CD8-positive, alpha-beta T cell (primary cell): ENCODE measurements at regions of chr19 and their contacts with region 1.

Region 1: DNA sequence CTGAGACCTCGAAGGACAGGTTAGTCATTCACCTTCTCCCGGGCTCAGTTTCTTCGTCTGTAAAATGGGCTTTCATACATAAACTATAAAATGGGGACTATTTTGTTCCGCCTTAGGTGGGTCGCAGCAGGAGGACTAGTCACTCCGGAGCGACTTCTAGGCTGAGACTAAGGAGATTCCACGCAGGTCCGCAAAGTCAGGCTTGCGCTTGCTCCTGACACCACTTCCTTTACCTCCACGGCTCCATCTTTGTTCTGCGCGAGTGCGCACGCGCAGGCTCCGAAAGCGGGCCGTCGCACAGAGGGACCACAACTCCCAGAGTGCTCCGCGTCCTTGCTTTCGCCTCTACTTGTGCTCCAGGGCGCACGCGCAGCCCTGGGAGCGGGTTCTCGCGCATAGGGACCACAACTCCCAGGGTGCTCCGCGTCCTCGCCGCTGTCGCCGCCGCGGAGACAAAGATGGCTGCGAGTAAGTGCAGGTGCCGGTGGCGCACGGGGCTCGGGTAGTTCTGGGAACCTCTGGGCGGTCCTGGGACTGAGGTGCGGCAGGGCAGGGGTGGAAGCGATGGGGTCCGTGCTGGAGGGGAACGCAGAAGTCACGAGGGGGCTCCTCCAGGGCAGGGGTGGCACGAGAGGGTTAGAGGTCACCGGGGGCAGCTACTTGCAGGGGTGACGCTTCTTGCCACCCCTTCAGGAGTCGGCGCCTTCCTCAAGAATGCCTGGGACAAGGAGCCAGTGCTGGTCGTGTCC is at the start of gene NDUFA3:
- DNase-seq: peak; percentile 94 to 100 (median 98)
- ATAC-seq: peak; percentile 99
- H3K4me3 ChIP-seq: peak within 1 kb of the TSS; percentile 66 to 81
- H3K4me3 Mint-ChIP-seq: peak within 1 kb of the TSS; percentile 99
- H3K27ac ChIP-seq: peak within 1 kb of the TSS; percentile 58 to 84
- H3K27ac Mint-ChIP-seq: peak within 1 kb of the TSS; percentile 96
- H3K4me1 ChIP-seq: peaks cover 10% of the 10 kb centered on the region
- H3K4me1 Mint-ChIP-seq: peaks cover 35% of the 10 kb centered on the region
- H3K27me3 ChIP-seq: no peaks in the 10 kb centered on the region
- H3K27me3 Mint-ChIP-seq: no peaks in the 10 kb centered on the region
- CTCF ChIP-seq: no peak
- total RNA-seq, gene NDUFA3: 51.8 to 66.8 TPM

Region 2: DNA sequence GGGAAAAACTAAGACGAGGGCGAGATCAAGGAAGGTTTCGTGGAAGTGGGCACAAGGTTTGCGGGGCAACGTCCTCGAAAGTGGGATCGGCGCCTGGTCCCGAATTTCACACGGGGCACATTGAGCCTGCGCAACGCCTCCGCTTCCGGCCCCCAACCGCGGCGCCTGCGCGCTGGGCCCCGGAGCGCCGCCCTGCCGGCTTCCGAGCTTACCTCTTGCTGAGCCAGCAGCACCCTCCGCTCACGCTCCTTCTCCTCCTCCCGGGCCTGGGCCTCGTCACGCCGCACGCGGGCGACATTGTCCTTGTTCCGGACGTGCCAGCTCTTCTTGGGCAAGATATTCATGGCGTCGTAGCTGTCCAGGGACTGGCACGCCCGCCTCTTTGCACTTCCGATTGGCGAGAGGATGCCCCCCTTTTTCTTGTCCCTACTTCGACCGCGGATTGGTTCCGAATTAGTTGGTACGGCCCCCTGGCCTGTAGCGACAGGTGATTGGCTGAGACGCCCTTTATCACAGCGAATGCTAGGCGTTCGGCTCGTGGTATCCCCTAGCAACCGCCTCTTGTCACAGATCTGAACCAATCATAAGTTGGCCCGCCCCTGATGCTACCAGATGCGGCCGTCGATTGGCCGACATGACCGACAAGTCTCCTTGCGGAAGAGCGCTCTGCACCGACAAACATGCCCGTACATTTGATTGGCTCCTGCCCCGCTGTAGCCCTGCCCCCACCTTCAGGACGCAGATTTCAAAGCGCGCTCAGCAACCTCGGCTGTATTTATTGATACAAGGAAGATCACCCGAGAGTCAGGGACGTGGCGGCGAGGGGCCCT is 57.0 kb after region 1 on chr19 and contains the start of gene LENG1:
- CTCF ChIA-PET with region 1: no interaction called
- POLR2A ChIA-PET with region 1: no interaction called
- intact Hi-C with region 1: loop called (anchors 1 to 2 kb)
- DNase-seq: peak; percentile 96 to 100 (median 98)
- ATAC-seq: peak; percentile 84
- H3K4me3 ChIP-seq: peak within 1 kb of the TSS; percentile 71 to 75
- H3K4me3 Mint-ChIP-seq: peak within 1 kb of the TSS; percentile 99
- H3K27ac ChIP-seq: peak within 1 kb of the TSS; percentile 79 to 87
- H3K27ac Mint-ChIP-seq: peak within 1 kb of the TSS; percentile 99
- H3K4me1 ChIP-seq: peaks cover 67% of the 10 kb centered on the region
- H3K4me1 Mint-ChIP-seq: peaks cover 59% of the 10 kb centered on the region
- H3K27me3 ChIP-seq: peaks cover 0 to 2% of the 10 kb centered on the region in 2 experiments
- H3K27me3 Mint-ChIP-seq: peaks cover 2% of the 10 kb centered on the region
- CTCF ChIP-seq: no peak
- total RNA-seq, gene LENG1: 15.5 to 15.8 TPM

Region 3: GRCh38 chr19:54390942-54391577 is 288.5 kb after region 1 on chr19:
- CTCF ChIA-PET with region 1: no interaction called
- POLR2A ChIA-PET with region 1: no interaction called
- intact Hi-C with region 1: no loop called
- DNase-seq: peak; percentile 38 to 88 (median 74)
- ATAC-seq: peak; percentile 45
- H3K4me3 ChIP-seq: no peak overlapping the region
- H3K4me3 Mint-ChIP-seq: peak overlapping the region; percentile 48
- H3K27ac ChIP-seq: no peak overlapping the region
- H3K27ac Mint-ChIP-seq: peak overlapping the region; percentile 33
- H3K4me1 ChIP-seq: peaks cover 32% of the 10 kb centered on the region
- H3K4me1 Mint-ChIP-seq: peaks cover 34% of the 10 kb centered on the region
- H3K27me3 ChIP-seq: no peaks in the 10 kb centered on the region
- H3K27me3 Mint-ChIP-seq: peaks cover 12% of the 10 kb centered on the region
- CTCF ChIP-seq: peak; percentile 94